ENCODE measurements at regions of chr22 and their contacts with region 1.

Region 1: GRCh38 chr22:20020533-20021195 is at the start of gene TANGO2:
- DNase-seq: peak; percentile 91
- H3K4me3 Mint-ChIP-seq: peak within 1 kb of the TSS; percentile 91
- H3K27ac Mint-ChIP-seq: peak within 1 kb of the TSS; percentile 80
- H3K4me1 Mint-ChIP-seq: peaks cover 17% of the 10 kb centered on the region
- H3K27me3 Mint-ChIP-seq: peaks cover 8% of the 10 kb centered on the region
- total RNA-seq, gene TANGO2: 27.4 and 30.0 TPM in 2 replicates

Region 2: DNA sequence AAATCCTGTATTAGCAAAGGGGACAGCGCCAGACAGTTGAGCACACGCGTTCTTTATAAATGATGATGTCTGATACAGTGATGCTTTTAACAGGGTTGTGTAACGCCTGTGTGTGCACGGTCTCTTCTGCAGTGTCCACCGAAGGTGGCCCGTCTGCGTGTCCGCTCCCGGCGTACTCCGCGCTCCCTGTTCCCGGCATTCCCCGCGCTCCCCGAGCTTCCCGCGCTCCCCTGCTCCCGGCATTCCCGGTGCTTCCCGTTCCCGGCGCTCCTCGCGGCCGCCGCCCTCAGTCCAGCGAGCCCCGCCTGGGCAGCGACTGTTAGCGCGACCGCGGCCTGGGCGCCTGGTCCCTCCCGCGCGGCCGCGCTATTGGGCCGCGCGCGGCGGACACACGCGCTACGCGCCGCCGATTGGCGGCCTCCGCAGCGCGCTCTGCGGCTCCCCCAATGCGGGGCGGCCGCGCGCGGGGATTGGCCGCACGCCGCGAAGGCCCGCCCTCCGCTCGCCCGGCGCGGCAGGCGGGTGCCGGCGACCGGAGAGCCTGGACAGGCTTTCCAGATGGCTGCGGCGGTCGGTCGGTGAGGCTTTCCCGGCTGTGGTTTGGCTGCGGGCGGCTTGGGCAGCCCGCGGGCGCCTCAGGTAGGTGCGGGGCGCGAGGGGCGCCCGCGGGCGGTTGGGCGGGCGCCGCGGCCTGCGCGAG is 59.2 kb after region 1 on chr22 and contains the start of gene DGCR8:
- intact Hi-C with region 1: loop called (anchors 10 kb)
- DNase-seq: peak; percentile 66
- H3K4me3 Mint-ChIP-seq: peak within 1 kb of the TSS; percentile 88
- H3K27ac Mint-ChIP-seq: peak within 1 kb of the TSS; percentile 75
- H3K4me1 Mint-ChIP-seq: peaks cover 25% of the 10 kb centered on the region
- H3K27me3 Mint-ChIP-seq: no peaks in the 10 kb centered on the region
- total RNA-seq, gene DGCR8: 63.1 and 66.4 TPM in 2 replicates

Region 3: DNA sequence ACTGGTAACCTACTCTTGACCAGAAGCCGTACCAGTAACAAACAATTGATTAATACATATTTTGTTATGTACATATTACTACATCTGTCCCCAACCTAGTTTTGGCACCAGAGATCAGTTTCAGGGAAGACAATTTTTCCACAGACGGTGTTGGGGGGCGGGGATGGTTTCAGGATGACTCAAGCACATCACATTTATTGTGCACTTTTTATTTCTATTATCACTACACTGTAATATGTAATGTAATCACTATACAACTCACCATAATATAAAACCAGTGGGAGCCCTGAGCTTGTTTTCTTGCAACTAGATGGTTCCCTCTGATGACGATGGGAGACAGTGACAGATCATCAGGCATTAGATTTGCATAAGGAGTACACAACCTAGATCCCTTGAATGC is 74.9 kb after region 1 on chr22:
- intact Hi-C with region 1: no loop called
- DNase-seq: no peak
- H3K4me3 Mint-ChIP-seq: no peak overlapping the region
- H3K27ac Mint-ChIP-seq: no peak overlapping the region
- H3K4me1 Mint-ChIP-seq: peaks cover 38% of the 10 kb centered on the region
- H3K27me3 Mint-ChIP-seq: no peaks in the 10 kb centered on the region